HCT116 (cell line): ENCODE measurements at regions of chr16 and their contacts with region 1.

Region 1: GRCh38 chr16:5502467-5502869 is 404.9 kb upstream of the EEF2KMT start:
- DNase-seq: no peak
- ATAC-seq: peak; percentile 40; the same call in 1 of the 2 replicates
- H3K4me3 ChIP-seq: no peak overlapping the region
- H3K27ac ChIP-seq: no peak overlapping the region
- H3K4me1 ChIP-seq: peaks cover 0 to 2% of the 10 kb centered on the region in 2 experiments; a peak in 1 of 4 replicates
- H3K27me3 ChIP-seq: peaks cover 5% of the 10 kb centered on the region; the same call in 1 of the 2 replicates
- CTCF ChIP-seq: peak; percentile 22 to 53 (median 35); a peak in 5 of 6 replicates
- POLR2A ChIP-seq: no peak
- RAD21 ChIP-seq: peak; percentile 56

Region 2: DNA sequence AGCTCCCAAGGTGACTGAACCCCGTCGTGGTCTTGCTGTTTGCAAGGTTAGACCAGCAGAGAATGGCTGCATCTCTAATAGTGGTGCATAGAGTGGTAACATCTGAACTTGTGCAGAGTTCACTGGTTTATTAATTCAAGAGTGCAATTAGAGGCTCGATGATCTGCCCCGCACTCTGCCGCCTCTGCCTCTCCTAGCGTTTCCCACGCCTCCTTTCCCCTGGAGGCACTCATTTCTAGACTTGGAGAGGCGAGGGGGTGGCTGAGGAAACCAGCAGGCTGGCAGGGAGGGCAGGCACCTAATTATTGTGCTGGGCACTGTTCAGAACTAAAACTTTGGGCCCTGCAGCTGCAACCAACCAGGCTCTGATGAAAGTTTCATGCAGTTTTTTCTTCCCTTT is 41.3 kb before region 1 on chr16:
- CTCF ChIA-PET with region 1: no interaction called
- POLR2A ChIA-PET with region 1: no interaction called
- RAD21 ChIA-PET with region 1: no interaction called
- intact Hi-C with region 1: no loop called
- DNase-seq: no peak
- ATAC-seq: no peak
- H3K4me3 ChIP-seq: no peak overlapping the region
- H3K27ac ChIP-seq: no peak overlapping the region
- H3K4me1 ChIP-seq: no peaks in the 10 kb centered on the region
- H3K27me3 ChIP-seq: peaks cover 10% of the 10 kb centered on the region; the same call in 1 of the 2 replicates
- CTCF ChIP-seq: no peak
- POLR2A ChIP-seq: no peak
- RAD21 ChIP-seq: no peak

Region 3: DNA sequence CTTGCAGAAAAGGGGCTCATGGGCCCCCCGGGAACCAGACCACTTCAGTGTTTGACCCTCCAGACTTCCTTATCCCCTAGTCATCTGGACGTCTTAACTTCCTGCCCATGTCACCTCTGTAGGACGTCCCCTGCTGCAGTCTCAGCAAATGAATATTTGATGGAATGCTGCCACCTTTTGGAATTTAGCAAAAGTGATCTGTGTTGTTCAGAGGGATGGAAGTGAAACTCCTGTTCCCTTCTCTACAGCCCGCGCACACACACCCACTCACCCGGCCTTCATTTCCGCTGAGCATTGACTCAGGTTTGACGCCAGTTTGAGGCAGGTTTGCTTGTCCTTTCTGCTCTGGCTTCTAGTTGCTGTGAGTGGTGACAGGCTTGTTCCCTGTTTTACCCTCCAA is 102.3 kb after region 1 on chr16:
- CTCF ChIA-PET with region 1: no interaction called
- POLR2A ChIA-PET with region 1: no interaction called
- RAD21 ChIA-PET with region 1: no interaction called
- intact Hi-C with region 1: loop called (anchors 5 kb)
- DNase-seq: peak; percentile 8
- ATAC-seq: peak; percentile 75
- H3K4me3 ChIP-seq: no peak overlapping the region
- H3K27ac ChIP-seq: no peak overlapping the region
- H3K4me1 ChIP-seq: no peaks in the 10 kb centered on the region
- H3K27me3 ChIP-seq: peaks cover 9% of the 10 kb centered on the region; the same call in 1 of the 2 replicates
- CTCF ChIP-seq: peak; percentile 6 to 43 (median 28); a peak in 4 of 6 replicates
- POLR2A ChIP-seq: no peak
- RAD21 ChIP-seq: peak; percentile 51

Region 4: DNA sequence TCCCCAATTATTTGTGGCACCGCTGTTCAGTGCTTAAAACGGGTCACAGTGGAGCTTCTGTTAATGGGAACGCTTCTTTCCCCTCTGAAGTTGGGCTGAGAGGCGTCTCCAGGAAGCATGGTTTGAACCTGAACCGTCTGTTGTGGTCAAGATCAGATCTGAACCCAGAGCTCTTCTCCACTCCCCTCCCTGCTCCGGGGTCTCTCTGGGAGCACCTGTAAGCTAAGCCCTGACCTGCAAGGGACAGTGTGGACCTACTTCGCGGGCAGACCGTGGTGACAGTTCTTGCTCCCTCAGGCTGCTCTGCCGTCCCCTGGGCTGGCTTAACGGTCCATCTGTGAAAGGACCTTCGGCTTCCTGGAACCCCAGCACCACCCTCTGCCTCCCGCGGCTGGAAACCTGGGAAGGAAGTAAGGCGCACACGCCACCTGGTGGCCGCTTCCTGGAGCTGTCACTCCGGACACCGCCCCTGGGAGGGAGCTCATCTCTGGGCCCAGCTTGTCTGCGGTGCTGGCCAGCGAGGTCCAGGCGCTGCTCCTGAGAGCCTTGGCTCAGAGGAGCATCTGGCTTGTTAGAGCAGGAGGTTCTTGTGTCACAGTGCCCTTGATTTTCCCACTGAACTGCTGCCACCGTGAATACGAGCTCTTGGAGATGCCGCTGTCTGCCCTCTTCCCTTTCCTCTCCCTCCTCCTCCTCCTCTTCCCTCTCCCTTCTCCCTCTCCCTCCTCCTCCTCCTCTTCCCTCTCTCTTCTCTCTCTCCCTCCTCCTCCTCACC is 113.6 kb after region 1 on chr16:
- CTCF ChIA-PET with region 1: interaction called, 17 read pairs
- POLR2A ChIA-PET with region 1: no interaction called
- RAD21 ChIA-PET with region 1: no interaction called
- intact Hi-C with region 1: loop called (anchors 1 kb)
- DNase-seq: peak; percentile 24
- ATAC-seq: peak; percentile 99
- H3K4me3 ChIP-seq: no peak overlapping the region
- H3K27ac ChIP-seq: no peak overlapping the region
- H3K4me1 ChIP-seq: peaks cover 0 to 3% of the 10 kb centered on the region in 2 experiments; a peak in 1 of 4 replicates
- H3K27me3 ChIP-seq: peaks cover 22% of the 10 kb centered on the region
- CTCF ChIP-seq: peak; percentile 47 to 84 (median 78); a peak in 5 of 6 replicates
- POLR2A ChIP-seq: no peak
- RAD21 ChIP-seq: peak; percentile 54